Activated CD4-positive, alpha-beta memory T cell treated with anti-CD3 and anti-CD28 coated beads, Interleukin-2, amount 10 ng/mL, durations not matched to agents 7 days and 5 days (primary cell): ENCODE measurements at regions of chr16 and their contacts with region 1.

Region 1: GRCh38 chr16:84186685-84187437 is at the start of gene TAF1C:
- DNase-seq: peak; percentile 92
- H3K4me3 Mint-ChIP-seq: peak within 1 kb of the TSS; percentile 93
- H3K27ac Mint-ChIP-seq: peak within 1 kb of the TSS; percentile 87
- H3K4me1 Mint-ChIP-seq: peaks cover 22% of the 10 kb centered on the region
- H3K27me3 Mint-ChIP-seq: no peaks in the 10 kb centered on the region
- total RNA-seq, gene TAF1C: 47.2 to 51.9 TPM

Region 2: DNA sequence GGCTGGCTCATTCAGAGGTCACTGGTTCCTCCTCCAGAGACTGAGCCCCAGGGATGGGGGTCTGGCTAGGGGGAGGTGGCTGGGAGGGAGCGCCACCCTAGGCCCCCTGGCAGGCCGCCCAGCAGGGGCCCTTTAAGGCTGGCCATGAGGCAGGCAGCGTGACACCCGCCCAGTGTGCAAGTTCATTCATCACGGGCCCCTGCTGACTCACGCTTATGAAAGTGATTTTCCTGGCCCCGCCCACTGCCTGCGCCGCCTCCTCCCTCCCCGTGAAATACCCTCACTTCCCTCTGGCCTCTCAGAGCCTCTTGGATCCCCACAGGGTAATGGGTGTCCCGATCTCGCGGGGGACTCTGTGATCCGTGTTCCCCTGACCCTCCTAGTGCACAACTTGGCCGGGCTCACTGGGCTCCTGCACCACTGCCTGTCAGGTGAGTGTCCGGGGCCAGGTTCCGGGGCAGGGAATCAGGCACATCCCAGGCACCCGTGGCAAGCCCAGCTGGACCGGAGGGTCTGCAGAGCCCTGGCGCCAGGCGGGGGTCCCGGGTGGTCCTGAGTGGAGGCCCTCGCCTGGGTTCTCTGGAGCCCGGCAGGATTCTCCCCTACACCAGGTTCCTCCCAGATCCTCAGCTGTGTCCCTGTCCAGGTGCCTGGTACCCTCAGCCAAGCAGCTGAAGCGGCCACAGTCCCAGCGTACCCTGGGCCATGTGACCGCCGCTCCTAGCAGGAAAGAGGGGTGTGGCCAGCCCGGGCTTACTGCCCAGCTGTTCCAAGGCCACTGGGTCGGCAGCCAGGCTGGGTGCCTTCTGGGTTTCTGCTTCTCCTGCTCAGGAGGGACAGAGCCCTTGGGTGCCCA is 233.7 kb before region 1 on chr16 and contains the start of gene OSGIN1:
- CTCF ChIA-PET with region 1: interaction called, 12 read pairs
- POLR2A ChIA-PET with region 1: no interaction called
- DNase-seq: peak; percentile 79
- H3K4me3 Mint-ChIP-seq: peak within 1 kb of the TSS; percentile 72
- H3K27ac Mint-ChIP-seq: no peak within 1 kb of the TSS
- H3K4me1 Mint-ChIP-seq: peaks cover 8% of the 10 kb centered on the region
- H3K27me3 Mint-ChIP-seq: peaks cover 6% of the 10 kb centered on the region
- total RNA-seq, gene OSGIN1: 0.48 to 0.88 TPM

Region 3: GRCh38 chr16:84065536-84066132 is 121.2 kb before region 1 on chr16:
- CTCF ChIA-PET with region 1: interaction called, 12 read pairs
- POLR2A ChIA-PET with region 1: no interaction called
- DNase-seq: peak; percentile 40
- H3K4me3 Mint-ChIP-seq: no peak overlapping the region
- H3K27ac Mint-ChIP-seq: no peak overlapping the region
- H3K4me1 Mint-ChIP-seq: peaks cover 4% of the 10 kb centered on the region
- H3K27me3 Mint-ChIP-seq: no peaks in the 10 kb centered on the region

Region 4: GRCh38 chr16:84116720-84117493 is 70.0 kb before region 1 on chr16 and contains the start of gene MBTPS1:
- CTCF ChIA-PET with region 1: interaction called, 17 read pairs
- POLR2A ChIA-PET with region 1: interaction called, 20 read pairs
- DNase-seq: peak; percentile 98
- H3K4me3 Mint-ChIP-seq: peak within 1 kb of the TSS; percentile 91
- H3K27ac Mint-ChIP-seq: peak within 1 kb of the TSS; percentile 88
- H3K4me1 Mint-ChIP-seq: peaks cover 24% of the 10 kb centered on the region
- H3K27me3 Mint-ChIP-seq: no peaks in the 10 kb centered on the region
- total RNA-seq, gene MBTPS1: 46.4 to 50.4 TPM

Region 5: DNA sequence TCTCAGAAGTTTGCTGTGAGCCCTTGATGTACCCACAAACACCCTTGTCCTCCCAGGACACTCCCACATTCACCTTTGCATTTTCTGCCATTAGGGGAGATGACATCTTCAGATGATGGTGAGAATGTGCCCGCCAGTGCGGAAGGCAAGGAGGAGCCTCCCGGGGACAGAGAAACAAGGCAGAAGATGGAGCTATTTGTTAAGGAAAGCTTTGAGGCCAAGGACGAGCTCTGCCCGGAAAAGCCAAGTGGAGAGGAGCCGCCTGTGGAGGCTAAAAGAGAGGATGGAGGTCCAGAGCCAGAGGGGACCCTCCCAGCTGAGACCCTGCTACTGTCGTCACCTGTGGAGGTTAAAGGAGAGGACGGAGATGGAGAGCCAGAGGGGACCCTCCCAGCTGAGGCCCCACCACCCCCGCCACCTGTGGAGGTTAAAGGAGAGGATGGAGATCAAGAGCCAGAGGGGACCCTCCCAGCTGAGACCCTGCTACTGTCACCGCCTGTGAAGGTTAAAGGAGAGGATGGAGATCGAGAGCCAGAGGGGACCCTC is 17.0 kb before region 1 on chr16:
- CTCF ChIA-PET with region 1: interaction called, 13 read pairs
- POLR2A ChIA-PET with region 1: interaction called, 4 read pairs
- DNase-seq: no peak
- H3K4me3 Mint-ChIP-seq: no peak overlapping the region
- H3K27ac Mint-ChIP-seq: no peak overlapping the region
- H3K4me1 Mint-ChIP-seq: peaks cover 5% of the 10 kb centered on the region
- H3K27me3 Mint-ChIP-seq: peaks cover 27% of the 10 kb centered on the region

Region 6: DNA sequence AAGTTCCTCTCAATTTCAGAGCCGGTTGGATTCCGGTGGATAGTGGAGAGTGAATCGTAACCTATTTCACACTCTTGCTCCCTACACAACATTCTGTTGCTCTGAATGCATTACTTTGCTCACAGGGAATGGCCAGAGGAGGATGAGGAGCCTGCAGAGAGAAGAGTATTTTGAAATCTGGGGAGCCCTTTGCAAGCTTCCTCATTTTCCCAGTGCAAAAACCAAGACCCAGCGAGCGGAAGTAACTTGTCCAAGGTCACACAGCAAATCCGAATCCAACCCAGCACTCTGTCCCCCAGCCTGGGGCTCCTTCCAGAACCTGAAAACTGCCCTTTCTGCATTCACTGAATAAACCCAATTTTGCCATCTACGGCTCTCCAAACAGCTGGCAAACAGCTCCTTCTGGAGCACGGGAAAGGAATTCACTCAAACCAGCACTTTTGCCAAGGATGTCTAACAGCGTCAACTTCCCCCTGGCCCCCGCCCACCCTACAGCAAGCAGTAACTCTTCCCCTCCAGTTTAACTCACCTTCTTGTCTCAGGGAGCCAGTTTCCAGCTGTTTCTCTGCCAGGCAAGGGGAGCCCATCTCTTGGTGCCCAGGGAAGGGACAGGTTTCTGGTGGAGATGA is 52.4 kb after region 1 on chr16:
- CTCF ChIA-PET with region 1: no interaction called
- POLR2A ChIA-PET with region 1: no interaction called
- DNase-seq: no peak
- H3K4me3 Mint-ChIP-seq: no peak overlapping the region
- H3K27ac Mint-ChIP-seq: no peak overlapping the region
- H3K4me1 Mint-ChIP-seq: no peaks in the 10 kb centered on the region
- H3K27me3 Mint-ChIP-seq: peaks cover 22% of the 10 kb centered on the region

Region 7: GRCh38 chr16:84357191-84357651 is 170.4 kb after region 1 on chr16:
- CTCF ChIA-PET with region 1: no interaction called
- POLR2A ChIA-PET with region 1: no interaction called
- DNase-seq: peak; percentile 50
- H3K4me3 Mint-ChIP-seq: no peak overlapping the region
- H3K27ac Mint-ChIP-seq: no peak overlapping the region
- H3K4me1 Mint-ChIP-seq: peaks cover 36% of the 10 kb centered on the region
- H3K27me3 Mint-ChIP-seq: peaks cover 9% of the 10 kb centered on the region